Activated CD4-positive, alpha-beta T cell treated with anti-CD3 and anti-CD28 coated beads, Interleukin-2, amount 10 ng/mL, durations not matched to agents 7 days and 5 days (primary cell): ENCODE measurements at regions of chr13 and their contacts with region 1.

Region 1: DNA sequence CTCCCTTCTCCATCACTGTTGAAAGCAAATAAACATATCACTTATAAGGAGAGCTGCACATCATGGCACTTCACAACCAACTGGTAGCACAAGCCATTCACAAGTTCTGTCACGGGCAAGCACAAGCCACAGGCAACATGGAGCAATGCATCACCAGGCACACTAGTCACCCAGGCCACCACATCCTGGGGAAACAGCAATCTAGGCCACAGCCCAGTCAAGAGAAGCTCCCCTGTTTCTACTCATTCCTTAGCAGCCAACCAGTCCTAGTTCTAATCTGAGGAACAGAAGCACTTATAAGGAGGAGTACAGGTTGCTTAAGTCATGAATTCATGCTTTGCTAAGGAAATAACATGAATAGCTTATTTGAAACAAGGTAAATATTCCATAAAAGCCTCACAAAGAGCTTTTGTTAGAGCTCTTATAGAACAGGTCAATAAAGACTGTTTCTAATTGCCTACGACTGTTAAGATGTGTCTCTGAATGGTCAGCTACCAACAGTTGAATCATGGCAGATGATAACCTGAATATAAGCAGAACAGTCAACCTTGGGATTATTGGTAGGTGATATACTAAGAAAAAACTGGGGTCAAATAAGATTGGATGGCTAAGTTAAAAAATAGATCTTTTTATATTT is 169.0 kb downstream of the TBC1D4 start:
- DNase-seq: peak; percentile 56
- H3K4me3 Mint-ChIP-seq: no peak overlapping the region
- H3K27ac Mint-ChIP-seq: peak overlapping the region; percentile 66
- H3K4me1 Mint-ChIP-seq: peaks cover 34% of the 10 kb centered on the region
- H3K27me3 Mint-ChIP-seq: no peaks in the 10 kb centered on the region

Region 2: GRCh38 chr13:75197803-75198202 is 115.2 kb before region 1 on chr13:
- CTCF ChIA-PET with region 1: no interaction called
- POLR2A ChIA-PET with region 1: no interaction called
- DNase-seq: no peak
- H3K4me3 Mint-ChIP-seq: no peak overlapping the region
- H3K27ac Mint-ChIP-seq: no peak overlapping the region
- H3K4me1 Mint-ChIP-seq: no peaks in the 10 kb centered on the region
- H3K27me3 Mint-ChIP-seq: peaks cover 5% of the 10 kb centered on the region

Region 3: DNA sequence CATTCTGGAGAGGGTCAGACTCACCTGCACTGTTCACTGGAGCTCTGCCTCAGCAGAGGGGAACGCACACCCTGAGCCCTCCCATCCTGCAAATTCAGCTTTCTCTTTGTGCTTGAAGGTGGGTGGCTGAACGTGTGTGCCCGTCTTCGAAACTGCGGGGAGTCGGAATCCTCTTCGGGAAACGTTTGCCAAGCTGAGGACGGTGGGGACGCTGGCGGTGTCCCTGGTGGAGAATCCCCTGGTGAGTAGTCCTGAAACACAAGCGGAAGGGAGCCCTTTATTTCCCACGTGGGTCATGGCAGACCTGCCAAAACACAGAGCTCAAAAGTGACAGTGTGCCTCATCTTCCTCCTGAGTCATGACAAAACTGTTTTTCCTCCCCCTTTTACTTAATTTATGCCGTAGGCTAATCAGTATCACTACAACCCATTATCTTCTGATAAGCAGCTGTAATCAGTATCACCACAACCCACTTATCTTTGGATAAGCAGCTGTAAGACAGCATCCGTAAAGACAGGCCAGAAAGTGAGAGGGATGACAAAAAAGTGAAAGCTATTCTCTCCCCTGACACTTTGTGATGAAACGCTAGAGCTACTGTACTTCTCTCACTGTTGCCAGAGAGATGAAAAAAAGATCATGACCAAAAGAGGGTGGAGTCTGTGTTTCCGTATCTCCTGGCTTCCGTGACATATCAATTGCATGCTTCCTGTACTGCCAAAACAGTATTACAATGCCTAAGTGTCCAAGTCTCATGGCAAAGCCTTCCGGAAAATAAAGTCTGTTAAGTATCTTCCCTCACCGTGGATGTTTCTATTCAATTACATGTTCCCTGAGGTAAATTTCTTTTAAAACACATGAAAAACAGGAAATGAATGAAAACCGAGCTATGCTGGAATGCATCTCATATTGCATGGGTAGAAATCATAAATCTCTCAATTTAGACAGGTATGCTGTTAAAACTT is 13.5 kb after region 1 on chr13:
- CTCF ChIA-PET with region 1: interaction called, 12 read pairs
- POLR2A ChIA-PET with region 1: interaction called, 3 read pairs
- DNase-seq: peak; percentile 74
- H3K4me3 Mint-ChIP-seq: peak overlapping the region; percentile 82
- H3K27ac Mint-ChIP-seq: peak overlapping the region; percentile 99
- H3K4me1 Mint-ChIP-seq: peaks cover 46% of the 10 kb centered on the region
- H3K27me3 Mint-ChIP-seq: no peaks in the 10 kb centered on the region